ENCODE measurements at regions of chr11 and their contacts with region 1.

Region 1: GRCh38 chr11:518463-519250 is 11.6 kb upstream of the RNH1 start:
- DNase-seq: peak; percentile 89
- ATAC-seq: peak; percentile 99
- H3K4me3 ChIP-seq: peak overlapping the region; percentile 22
- H3K27ac ChIP-seq: no peak overlapping the region
- H3K4me1 ChIP-seq: no peaks in the 10 kb centered on the region
- H3K27me3 ChIP-seq: no peaks in the 10 kb centered on the region
- CTCF ChIP-seq: peak; percentile 100; the same call in 1 of the 2 replicates
- POLR2A ChIP-seq: no peak
- RAD21 ChIP-seq: peak; percentile 77

Region 2: DNA sequence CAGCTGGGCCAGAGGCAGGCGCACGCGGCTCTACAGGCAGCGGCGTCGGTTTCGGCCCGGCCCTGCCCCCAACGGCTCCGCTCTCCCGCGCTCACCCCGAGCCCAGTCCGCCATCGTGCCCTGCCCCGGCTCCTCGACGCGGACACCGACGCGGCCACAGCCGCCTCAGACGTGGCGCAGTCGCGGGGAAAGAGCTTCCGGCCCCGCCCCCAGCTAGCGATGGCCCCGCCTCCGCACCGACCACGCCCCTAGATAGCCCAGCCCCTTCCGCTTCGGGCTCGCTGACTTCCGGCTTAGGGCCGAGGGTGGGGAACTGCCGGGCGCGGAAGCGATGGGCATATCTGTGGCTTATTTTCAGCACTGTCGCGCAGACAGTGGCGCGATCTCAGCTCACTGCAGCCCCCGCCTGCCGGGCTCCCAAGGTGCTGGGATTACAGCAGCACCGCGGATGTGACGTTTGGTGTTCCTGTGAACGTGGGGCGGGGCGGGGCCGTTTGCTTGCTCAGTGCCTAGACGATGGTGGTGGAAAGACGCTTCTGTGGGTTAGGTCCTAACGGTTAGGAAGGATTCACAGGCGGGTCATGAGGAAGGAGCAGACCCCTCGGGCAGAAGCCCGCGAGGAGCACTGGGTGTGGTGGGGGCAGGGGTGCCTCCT is 311.3 kb before region 1 on chr11 and contains the starts of genes BET1L and RIC8A:
- CTCF ChIA-PET with region 1: no interaction called
- POLR2A ChIA-PET with region 1: no interaction called
- dilution Hi-C with region 1: no loop called
- in situ Hi-C with region 1: no loop called
- intact Hi-C with region 1: loop called (anchors 5 kb)
- DNase-seq: peak; percentile 99
- ATAC-seq: peak; percentile 76
- H3K4me3 ChIP-seq: peak within 1 kb of the TSS; percentile 70
- H3K27ac ChIP-seq: peak within 1 kb of the TSS; percentile 88
- H3K4me1 ChIP-seq: peaks cover 25% of the 10 kb centered on the region
- H3K27me3 ChIP-seq: no peaks in the 10 kb centered on the region
- CTCF ChIP-seq: no peak
- POLR2A ChIP-seq: peak; percentile 96
- RAD21 ChIP-seq: no peak
- total RNA-seq, gene BET1L: 10.0 and 10.8 TPM in 2 replicates
- total RNA-seq, gene RIC8A: 114 and 129 TPM in 2 replicates

Region 3: DNA sequence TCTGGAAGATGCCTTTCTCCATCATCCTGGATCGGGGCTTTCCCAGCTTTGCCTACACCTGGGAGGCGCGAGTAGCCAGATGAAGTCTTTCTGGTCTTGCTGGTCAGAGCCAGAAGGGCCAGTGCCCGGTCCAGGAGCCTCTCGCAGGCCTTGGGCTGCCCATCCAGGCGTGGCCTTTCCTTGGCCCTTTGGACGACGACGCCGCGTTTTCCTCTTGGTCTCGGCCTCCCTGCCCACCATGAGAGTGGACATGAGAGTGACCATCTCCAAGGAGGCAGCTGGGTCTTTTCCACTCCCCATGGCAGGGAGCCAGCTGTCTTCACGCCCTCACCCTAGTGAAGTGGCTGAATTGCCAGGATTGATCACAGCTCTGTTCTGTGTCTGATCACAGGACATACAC is 65.1 kb before region 1 on chr11:
- CTCF ChIA-PET with region 1: no interaction called
- POLR2A ChIA-PET with region 1: interaction called, 10 read pairs
- dilution Hi-C with region 1: no loop called
- in situ Hi-C with region 1: no loop called
- intact Hi-C with region 1: no loop called
- DNase-seq: no peak
- ATAC-seq: no peak
- H3K4me3 ChIP-seq: no peak overlapping the region
- H3K27ac ChIP-seq: no peak overlapping the region
- H3K4me1 ChIP-seq: peaks cover 6% of the 10 kb centered on the region
- H3K27me3 ChIP-seq: no peaks in the 10 kb centered on the region
- CTCF ChIP-seq: no peak
- POLR2A ChIP-seq: no peak
- RAD21 ChIP-seq: no peak

Region 4: DNA sequence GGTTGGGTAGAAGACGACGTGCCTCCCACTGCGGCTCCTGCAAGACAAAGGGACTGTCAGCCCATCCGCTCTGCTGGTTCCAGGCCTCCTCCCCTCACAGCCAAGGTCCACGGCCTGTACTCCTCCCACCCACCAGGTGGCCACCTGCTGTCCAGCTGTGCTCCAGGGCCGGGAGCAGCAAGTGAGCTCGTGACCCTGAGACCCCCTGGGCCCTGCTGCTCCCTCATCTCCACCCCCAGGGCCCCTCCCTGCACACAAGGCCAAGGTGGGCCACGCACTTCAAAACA is 351.4 kb after region 1 on chr11:
- CTCF ChIA-PET with region 1: no interaction called
- POLR2A ChIA-PET with region 1: no interaction called
- dilution Hi-C with region 1: no loop called
- in situ Hi-C with region 1: no loop called
- intact Hi-C with region 1: no loop called
- DNase-seq: no peak
- ATAC-seq: no peak
- H3K4me3 ChIP-seq: no peak overlapping the region
- H3K27ac ChIP-seq: no peak overlapping the region
- H3K4me1 ChIP-seq: no peaks in the 10 kb centered on the region; the same call in 1 of the 2 replicates
- H3K27me3 ChIP-seq: no peaks in the 10 kb centered on the region
- CTCF ChIP-seq: 0 out of 2 replicates have a peak, but pooled peaks have one; percentile 11
- POLR2A ChIP-seq: no peak
- RAD21 ChIP-seq: no peak

Measured in IMR-90 (cell line).